Left cardiac atrium (tissue), 4 donors: ENCODE measurements at regions of chr12 and their contacts with region 1.

Region 1: DNA sequence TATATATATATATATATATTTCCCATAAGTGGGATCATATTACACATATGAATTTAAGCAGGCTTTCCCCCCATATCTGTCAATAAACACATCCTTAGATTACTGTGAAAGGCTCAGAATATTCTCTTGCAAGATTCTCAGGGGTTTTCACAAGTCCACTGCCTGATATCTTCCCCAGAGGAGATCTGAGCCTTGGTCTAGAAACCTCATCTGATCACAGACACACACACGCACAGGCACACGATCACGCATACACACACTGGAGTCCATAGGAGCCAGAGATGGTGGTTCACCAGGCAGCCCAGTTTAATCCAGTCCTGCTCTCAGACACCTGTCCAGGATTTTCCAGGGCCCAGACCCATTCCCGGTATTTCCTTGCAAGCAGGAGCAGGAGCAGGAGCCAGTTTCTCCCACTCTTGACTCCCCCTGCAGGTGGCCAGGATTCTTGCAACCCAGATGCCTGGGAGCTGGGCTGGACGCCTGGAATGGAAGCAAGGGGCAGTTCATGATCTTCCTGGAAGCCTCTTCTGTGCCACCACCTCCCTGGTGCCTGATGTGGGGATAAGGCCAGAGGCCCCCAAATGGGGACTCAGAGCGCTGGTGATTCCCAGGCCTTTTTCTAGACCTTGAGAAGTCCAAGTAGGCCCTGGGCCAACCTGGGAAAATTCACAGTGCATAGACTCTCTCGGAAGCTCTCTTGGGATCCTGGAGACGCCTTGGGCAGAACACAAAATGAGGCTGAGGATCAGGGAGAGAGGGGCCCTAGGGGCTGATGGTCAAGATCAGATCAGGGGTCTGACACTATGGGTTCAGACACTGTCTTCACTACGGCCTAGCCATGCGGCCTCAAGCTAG is 16.5 kb upstream of the KRT78 start:
- DNase-seq: peak; percentile 68
- ATAC-seq: peak; percentile 65 to 70

Region 2: DNA sequence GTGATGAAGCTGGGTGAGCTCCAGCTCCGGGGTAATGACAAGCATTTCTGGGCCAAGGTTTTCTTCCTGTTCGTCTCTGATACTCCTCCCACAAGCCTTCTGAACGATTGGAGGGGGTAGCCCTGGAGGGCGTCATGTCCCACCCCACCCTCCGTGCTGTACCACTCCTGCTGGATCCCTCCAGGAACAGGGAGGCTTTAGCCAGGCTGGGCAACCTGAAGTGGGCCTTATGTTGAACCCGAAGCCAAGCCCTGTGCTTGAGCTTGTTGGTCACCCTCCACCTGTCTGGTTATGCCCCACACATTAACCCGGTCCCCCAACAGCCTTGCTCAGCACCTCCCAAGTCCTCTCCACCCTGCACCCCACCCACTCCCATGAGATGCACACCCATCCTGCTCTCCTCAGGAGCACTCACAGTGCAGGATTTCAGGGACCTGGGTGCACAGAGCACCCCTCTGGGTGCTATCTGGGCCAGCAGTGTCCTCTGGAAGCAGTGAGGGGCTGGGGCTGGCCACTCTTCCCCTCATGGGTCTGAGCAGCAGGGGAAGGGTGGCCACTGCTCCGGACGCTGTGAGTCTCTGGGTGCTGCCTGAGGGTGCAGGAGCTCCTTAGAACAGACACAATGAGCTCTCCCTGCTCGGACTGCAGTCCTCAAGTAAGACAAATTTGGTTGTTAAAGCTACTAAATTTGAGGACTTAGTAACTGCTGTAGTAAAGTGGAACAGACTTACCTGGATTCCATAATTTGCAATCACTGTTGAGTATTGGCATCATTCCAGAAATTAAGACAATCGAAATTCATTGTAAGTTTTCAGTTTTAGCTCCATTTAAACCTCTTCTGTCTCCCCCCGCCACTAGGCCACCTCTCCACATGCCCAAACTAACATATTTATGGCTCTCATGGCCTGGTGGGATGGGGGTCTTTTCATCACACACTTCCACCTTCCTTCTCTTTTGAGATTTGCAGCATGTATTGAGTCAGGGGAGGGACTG is 537.2 kb before region 1 on chr12:
- intact Hi-C with region 1: no loop called
- DNase-seq: no peak
- ATAC-seq: peak in 1 of 2 donors; percentile 27

Region 3: DNA sequence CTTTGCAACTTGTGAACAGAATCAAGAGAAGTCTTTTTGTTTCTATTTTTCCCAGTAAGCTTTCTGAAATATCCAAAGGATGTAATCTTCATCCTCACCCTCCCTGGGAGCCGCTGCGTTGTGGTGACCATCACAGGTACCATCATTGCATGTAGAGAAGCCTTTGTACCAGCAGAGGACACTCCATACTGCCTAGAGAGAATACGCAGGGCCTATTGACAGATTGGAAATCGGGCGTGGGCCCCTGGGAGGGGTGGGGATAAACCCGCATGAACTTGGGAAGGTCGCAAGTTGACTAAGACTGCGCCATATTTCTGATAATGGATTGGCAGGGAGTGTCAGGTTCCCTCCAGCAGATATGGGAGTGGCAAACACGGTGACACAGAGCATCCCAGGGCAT is 197.8 kb before region 1 on chr12:
- intact Hi-C with region 1: loop called in 1 of 2 experiments (anchors 5 kb)
- DNase-seq: no peak
- ATAC-seq: no peak

Region 4: GRCh38 chr12:52805000-52805399 is 60.3 kb before region 1 on chr12:
- intact Hi-C with region 1: no loop called
- DNase-seq: no peak
- ATAC-seq: no peak

Region 5: GRCh38 chr12:52821826-52822660 is 43.3 kb before region 1 on chr12:
- intact Hi-C with region 1: no loop called
- DNase-seq: no peak
- ATAC-seq: no peak